GM12878 (cell line): ENCODE measurements at regions of chr7 and their contacts with region 1.

Region 1: DNA sequence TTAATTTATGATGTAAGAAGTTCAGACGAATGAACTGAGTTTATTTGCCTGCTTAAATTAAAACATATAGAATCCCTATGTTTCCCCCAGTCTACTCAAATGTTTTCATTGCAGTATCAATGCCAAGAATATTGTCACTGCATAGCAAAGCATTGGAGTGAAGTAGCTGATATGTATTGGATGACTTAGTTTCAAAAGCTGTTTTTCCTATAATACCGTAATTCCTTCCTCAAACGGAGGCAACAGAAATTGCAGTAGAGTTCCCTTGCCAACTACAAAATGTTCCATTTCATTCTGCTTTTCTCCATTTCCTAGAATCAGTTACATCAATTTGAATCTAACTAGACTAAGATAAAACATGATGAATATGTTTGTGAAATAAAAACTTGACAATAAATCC is 174.1 kb downstream of the CNTNAP2 start:
- DNase-seq: no peak
- ATAC-seq: no peak
- H3K4me3 ChIP-seq: no peak overlapping the region
- H3K27ac ChIP-seq: no peak overlapping the region
- H3K4me1 ChIP-seq: no peaks in the 10 kb centered on the region
- H3K27me3 ChIP-seq: no peaks in the 10 kb centered on the region
- CTCF ChIP-seq: no peak
- EP300 ChIP-seq: no peak
- POLR2A ChIP-seq: no peak
- RAD21 ChIP-seq: no peak

Region 2: DNA sequence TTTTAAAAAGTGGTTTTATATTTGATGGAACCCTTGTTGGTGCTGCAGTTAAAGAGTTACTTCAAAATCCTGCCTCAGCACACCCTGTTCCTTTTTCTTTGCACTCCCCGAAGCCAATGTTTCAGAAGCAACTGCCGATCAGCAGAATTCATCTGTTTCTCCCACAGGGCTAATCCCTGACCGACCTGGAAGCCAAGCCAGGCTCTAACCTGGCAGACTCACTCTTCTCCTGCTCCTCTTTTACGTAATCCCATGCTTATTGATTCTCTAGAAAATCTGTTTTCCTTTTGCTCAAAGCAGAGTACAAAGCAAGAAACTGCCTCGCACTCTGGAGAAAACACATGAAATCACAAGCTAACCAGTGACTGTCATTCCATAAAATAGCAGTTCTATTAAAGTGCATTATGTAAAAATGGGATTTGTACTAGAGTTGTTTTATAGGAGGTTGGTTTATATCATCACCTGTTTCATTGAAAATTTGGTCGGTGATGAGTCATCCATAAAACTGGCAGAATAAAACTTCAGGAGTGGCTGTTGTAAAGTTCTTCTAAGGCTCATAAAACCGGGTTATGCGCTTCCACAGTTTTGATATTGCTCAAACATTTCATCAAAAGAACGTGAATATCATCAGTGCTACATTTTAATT is 74.2 kb before region 1 on chr7:
- CTCF ChIA-PET with region 1: no interaction called
- POLR2A ChIA-PET with region 1: no interaction called
- RAD21 ChIA-PET with region 1: no interaction called
- SMC1A ChIA-PET with region 1: no interaction called
- in situ Hi-C with region 1: no loop called
- intact Hi-C with region 1: no loop called
- DNase-seq: no peak
- ATAC-seq: no peak
- H3K4me3 ChIP-seq: no peak overlapping the region
- H3K27ac ChIP-seq: no peak overlapping the region
- H3K4me1 ChIP-seq: no peaks in the 10 kb centered on the region
- H3K27me3 ChIP-seq: no peaks in the 10 kb centered on the region
- CTCF ChIP-seq: no peak
- EP300 ChIP-seq: no peak
- POLR2A ChIP-seq: no peak
- RAD21 ChIP-seq: no peak

Region 3: GRCh38 chr7:146359176-146359575 is 68.4 kb after region 1 on chr7:
- CTCF ChIA-PET with region 1: no interaction called
- POLR2A ChIA-PET with region 1: no interaction called
- RAD21 ChIA-PET with region 1: no interaction called
- SMC1A ChIA-PET with region 1: no interaction called
- in situ Hi-C with region 1: no loop called
- intact Hi-C with region 1: loop called (anchors 10 kb)
- DNase-seq: no peak
- ATAC-seq: no peak
- H3K4me3 ChIP-seq: no peak overlapping the region
- H3K27ac ChIP-seq: no peak overlapping the region
- H3K4me1 ChIP-seq: no peaks in the 10 kb centered on the region
- H3K27me3 ChIP-seq: no peaks in the 10 kb centered on the region
- CTCF ChIP-seq: no peak
- EP300 ChIP-seq: no peak
- POLR2A ChIP-seq: no peak
- RAD21 ChIP-seq: no peak